Activated B cell treated with CpG ODN at 0.5 μM for 24 hours (primary cell): ENCODE measurements at regions of chr13 and their contacts with region 1.

Region 1: DNA sequence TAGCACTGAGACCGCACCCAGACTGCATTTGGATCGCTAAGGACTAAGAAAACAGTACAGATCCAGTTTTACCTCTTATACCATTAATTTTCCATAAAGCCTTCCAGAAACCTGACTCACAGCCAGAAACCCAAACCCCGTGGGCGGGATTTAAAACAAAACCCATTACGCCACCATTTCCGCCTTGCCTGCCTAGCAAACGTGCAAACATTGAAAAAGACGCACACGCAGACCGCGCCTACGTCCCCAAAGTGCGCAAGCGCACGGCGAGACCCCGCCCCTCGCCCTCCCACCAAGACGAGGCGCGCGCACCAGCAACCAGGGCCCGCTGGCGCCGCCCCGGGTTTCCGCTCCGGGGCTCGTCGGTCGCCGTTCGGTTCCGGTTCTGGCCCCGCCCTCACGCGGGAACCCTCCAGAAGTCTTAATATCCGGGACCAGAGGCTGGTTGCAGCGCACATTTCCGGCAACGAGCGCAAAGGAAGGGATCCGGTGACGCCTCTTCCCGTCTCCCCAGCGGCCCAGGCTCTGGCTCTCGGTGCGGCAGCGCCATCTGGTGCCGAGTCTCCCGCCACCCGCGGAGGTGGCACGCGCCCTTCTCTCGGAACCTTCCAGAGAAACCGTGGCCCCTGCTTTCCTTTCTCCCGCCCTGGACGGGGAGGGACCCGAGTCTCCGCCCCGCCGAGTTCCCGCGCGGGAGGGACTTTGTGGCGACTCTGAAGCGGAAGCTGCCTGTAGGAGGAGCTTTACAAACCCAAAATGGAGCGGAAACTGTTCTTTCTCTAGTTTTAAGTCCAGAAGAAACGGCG is 256.9 kb upstream of the STARD13 start:
- DNase-seq: peak; percentile 98
- ATAC-seq: peak; percentile 83
- H3K4me3 Mint-ChIP-seq: peak overlapping the region; percentile 96
- H3K27ac Mint-ChIP-seq: peak overlapping the region; percentile 100
- H3K4me1 Mint-ChIP-seq: peaks cover 50% of the 10 kb centered on the region
- H3K27me3 Mint-ChIP-seq: no peaks in the 10 kb centered on the region
- CTCF ChIP-seq: no peak

Region 2: GRCh38 chr13:32315238-32316027 is 1227.1 kb before region 1 on chr13 and contains the starts of genes BRCA2 and ZAR1L:
- CTCF ChIA-PET with region 1: interaction called, 3 read pairs
- POLR2A ChIA-PET with region 1: interaction called, 11 read pairs
- intact Hi-C with region 1: loop called (anchors 1 kb)
- DNase-seq: peak; percentile 80
- ATAC-seq: peak; percentile 88
- H3K4me3 Mint-ChIP-seq: peak within 1 kb of the TSS; percentile 94
- H3K27ac Mint-ChIP-seq: peak within 1 kb of the TSS; percentile 100
- H3K4me1 Mint-ChIP-seq: peaks cover 14% of the 10 kb centered on the region
- H3K27me3 Mint-ChIP-seq: no peaks in the 10 kb centered on the region
- CTCF ChIP-seq: no peak
- total RNA-seq, gene BRCA2: 4.5 and 6.6 TPM in 2 replicates
- total RNA-seq, gene ZAR1L: not detected in 2 replicates

Region 3: GRCh38 chr13:32586080-32586900 is 956.2 kb before region 1 on chr13 and contains the start of gene PDS5B:
- CTCF ChIA-PET with region 1: interaction called, 4 read pairs
- POLR2A ChIA-PET with region 1: interaction called, 7 read pairs
- intact Hi-C with region 1: loop called (anchors 1 kb)
- DNase-seq: peak; percentile 99
- ATAC-seq: peak; percentile 90
- H3K4me3 Mint-ChIP-seq: peak within 1 kb of the TSS; percentile 96
- H3K27ac Mint-ChIP-seq: peak within 1 kb of the TSS; percentile 91
- H3K4me1 Mint-ChIP-seq: peaks cover 41% of the 10 kb centered on the region
- H3K27me3 Mint-ChIP-seq: no peaks in the 10 kb centered on the region
- CTCF ChIP-seq: no peak
- total RNA-seq, gene PDS5B: 47.2 and 49.4 TPM in 2 replicates

Region 4: GRCh38 chr13:32761472-32761871 is 781.0 kb before region 1 on chr13:
- CTCF ChIA-PET with region 1: no interaction called
- POLR2A ChIA-PET with region 1: no interaction called
- intact Hi-C with region 1: loop called (anchors 5 kb)
- DNase-seq: no peak
- ATAC-seq: no peak
- H3K4me3 Mint-ChIP-seq: no peak overlapping the region
- H3K27ac Mint-ChIP-seq: no peak overlapping the region
- H3K4me1 Mint-ChIP-seq: no peaks in the 10 kb centered on the region
- H3K27me3 Mint-ChIP-seq: no peaks in the 10 kb centered on the region
- CTCF ChIP-seq: no peak

Region 5: DNA sequence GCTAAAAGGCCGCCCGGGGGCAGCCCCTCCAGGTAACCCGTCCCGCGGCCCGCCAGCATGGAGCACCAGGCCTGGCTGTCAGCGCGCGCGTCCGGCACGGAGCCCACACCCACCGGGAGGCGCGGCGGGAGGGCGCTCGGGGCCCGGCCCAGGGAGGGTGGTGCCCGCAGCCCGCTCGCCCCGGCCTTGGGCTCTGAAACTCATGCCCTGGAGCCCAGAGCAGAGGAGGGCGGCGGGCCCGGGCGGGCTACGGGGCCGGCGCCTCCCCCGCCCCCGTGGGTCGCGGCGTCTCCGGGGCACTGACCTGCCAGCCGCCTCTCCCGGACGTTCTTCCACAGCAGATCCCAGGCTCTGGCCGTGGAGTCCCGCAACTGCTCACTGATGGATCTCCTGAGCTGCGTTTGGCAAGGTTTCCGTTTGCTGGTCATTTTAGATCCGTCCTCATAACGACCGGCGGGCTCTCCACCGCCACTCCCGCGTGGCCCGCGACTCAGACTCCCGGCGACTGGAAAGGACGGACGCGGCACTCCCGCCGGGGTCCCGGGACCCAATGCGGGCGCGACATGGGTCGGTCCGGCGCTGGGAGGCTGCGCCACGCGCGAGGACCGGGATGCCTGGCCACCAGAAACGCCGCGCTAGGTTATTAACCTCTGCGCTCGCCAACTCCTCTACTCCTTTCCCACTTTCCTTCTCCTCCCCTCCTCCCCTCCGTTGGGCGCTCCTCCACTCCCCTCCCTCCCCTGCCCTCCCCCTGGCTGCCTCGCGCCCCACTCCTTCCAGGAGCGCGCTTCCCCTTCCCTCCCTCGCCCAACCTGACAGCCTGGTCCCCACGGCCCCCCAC is 192.3 kb before region 1 on chr13:
- CTCF ChIA-PET with region 1: no interaction called
- POLR2A ChIA-PET with region 1: no interaction called
- intact Hi-C with region 1: loop called (anchors 5 kb)
- DNase-seq: no peak
- ATAC-seq: peak; percentile 21
- H3K4me3 Mint-ChIP-seq: peak overlapping the region; percentile 66
- H3K27ac Mint-ChIP-seq: no peak overlapping the region
- H3K4me1 Mint-ChIP-seq: peaks cover 41% of the 10 kb centered on the region
- H3K27me3 Mint-ChIP-seq: peaks cover 24% of the 10 kb centered on the region
- CTCF ChIP-seq: no peak

Region 6: DNA sequence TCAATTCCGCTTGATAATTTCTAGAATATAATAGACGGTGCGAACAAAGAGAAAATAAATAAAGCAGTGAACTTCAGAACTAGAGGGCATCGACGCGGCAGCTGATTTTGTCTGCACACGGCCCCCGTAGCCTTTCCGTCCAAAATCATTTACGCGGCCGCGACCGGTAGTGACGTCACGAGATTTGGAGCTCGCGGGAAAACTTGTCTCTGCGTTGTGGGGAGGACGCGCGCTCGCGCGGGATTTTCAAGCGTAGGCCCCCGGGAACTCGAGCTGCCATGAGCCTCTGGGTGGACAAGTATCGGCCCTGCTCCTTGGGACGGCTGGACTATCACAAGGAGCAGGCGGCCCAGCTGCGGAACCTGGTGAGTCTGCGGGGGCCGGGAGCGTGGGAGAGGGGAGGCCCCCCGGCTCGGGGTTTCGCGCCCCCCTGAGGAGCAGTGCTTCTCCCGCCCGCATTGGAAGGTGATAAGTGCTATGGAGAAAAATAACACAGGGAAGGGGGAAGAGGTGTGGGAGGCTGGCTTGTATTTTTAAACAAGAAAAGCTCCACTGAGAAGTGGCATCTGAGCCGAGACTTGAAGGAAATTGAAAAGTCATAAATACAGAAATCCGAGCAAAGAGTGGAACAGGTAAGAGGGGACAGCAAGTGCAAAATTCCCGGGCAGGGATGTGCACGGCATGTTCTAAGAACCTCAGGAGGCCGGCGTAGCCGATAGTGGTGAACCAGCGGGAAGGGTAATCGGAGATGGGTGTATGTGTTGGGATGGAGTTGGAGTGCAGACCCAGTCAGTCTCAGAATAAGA is 275.6 kb after region 1 on chr13 and contains the start of gene RFC3:
- CTCF ChIA-PET with region 1: no interaction called
- POLR2A ChIA-PET with region 1: interaction called, 14 read pairs
- intact Hi-C with region 1: loop called (anchors 1 kb)
- DNase-seq: peak; percentile 84
- ATAC-seq: peak; percentile 94
- H3K4me3 Mint-ChIP-seq: peak within 1 kb of the TSS; percentile 93
- H3K27ac Mint-ChIP-seq: peak within 1 kb of the TSS; percentile 91
- H3K4me1 Mint-ChIP-seq: peaks cover 19% of the 10 kb centered on the region
- H3K27me3 Mint-ChIP-seq: peaks cover 5% of the 10 kb centered on the region
- CTCF ChIP-seq: no peak
- total RNA-seq, gene RFC3: 13.5 and 14.3 TPM in 2 replicates